CD8-positive, alpha-beta T cell (primary cell): ENCODE measurements at regions of chr5 and their contacts with region 1.

Region 1: DNA sequence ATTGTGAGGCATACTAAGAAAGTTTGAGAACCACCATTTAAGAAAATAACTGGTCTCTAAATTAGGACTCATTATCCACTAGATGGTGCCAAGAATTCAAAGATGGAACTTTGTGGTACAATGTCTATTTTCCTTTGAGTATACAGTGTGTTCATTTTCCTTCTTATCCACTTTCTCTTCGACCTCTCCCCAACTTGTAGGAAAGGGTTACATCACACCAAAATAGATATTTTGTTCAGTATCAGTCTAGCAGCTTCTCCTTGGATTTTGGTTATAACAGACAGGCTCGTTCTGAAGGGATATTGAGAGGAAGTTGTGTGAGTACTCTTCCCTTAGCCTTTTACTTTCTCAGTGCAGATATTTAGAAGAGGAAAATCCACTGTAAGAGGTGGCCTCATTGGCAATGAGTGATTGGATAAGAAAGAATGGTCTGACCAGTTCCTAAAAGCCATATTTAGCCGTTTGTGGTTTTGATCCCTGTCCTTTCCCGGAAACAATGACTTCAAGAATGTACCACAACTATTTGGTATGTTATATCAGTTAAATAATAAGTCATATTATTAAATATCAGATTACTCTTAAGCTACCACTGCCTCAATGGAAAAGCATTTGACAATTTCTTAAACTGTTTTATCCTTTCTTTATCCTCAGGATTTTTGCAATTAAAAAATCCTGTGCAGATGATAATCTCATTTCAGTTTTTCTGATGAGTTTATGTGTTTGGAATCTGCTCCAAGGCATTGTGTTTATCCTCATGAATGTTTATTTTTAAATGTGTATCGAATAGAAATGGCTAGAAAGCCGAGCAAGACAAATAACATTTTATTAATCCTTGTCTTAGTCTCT is 69.0 kb upstream of the GRAMD2B start:
- DNase-seq: peak in 2 of 9 experiments; percentile 57 to 70
- ATAC-seq: peak; percentile 56
- H3K4me3 ChIP-seq: peak overlapping the region in 1 of 2 experiments; percentile 14
- H3K4me3 Mint-ChIP-seq: peak overlapping the region; percentile 66
- H3K27ac ChIP-seq: no peak overlapping the region
- H3K27ac Mint-ChIP-seq: peak overlapping the region; percentile 3
- H3K4me1 ChIP-seq: peaks cover 13% of the 10 kb centered on the region
- H3K4me1 Mint-ChIP-seq: peaks cover 14% of the 10 kb centered on the region
- H3K27me3 ChIP-seq: no peaks in the 10 kb centered on the region
- H3K27me3 Mint-ChIP-seq: peaks cover 3% of the 10 kb centered on the region
- CTCF ChIP-seq: peak; percentile 75

Region 2: DNA sequence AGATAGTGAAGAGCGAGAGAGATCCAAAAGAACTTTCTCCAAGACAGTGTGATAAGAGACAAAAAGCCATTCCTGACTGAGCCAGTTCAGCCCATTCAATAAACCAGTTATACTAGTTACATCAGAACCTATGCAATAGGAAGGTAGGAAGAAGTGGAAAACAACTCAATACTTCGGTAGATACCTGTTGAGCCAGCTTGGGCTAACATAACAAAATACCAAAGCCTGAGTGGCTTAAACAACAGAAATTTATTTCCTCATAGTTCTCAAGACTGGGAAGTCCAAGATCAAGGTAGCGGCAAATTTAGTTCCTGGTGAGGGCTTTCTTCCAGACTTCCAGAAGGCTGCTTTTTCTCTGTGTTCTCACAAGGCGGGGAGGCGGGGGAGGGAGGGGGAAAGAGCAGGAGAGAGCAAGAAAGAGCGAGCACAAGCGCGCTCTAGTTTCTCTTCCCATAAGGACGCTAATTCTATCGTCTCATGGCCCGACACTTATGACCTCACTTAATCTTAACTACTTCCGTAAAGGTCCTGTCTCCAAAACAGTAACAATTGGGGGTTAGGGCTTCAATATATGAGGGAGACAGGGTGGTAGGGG is 145.4 kb before region 1 on chr5:
- CTCF ChIA-PET with region 1: no interaction called
- POLR2A ChIA-PET with region 1: no interaction called
- intact Hi-C with region 1: no loop called
- DNase-seq: no peak
- ATAC-seq: no peak
- H3K4me3 ChIP-seq: no peak overlapping the region
- H3K4me3 Mint-ChIP-seq: no peak overlapping the region
- H3K27ac ChIP-seq: no peak overlapping the region
- H3K27ac Mint-ChIP-seq: no peak overlapping the region
- H3K4me1 ChIP-seq: no peaks in the 10 kb centered on the region
- H3K4me1 Mint-ChIP-seq: no peaks in the 10 kb centered on the region
- H3K27me3 ChIP-seq: no peaks in the 10 kb centered on the region
- H3K27me3 Mint-ChIP-seq: peaks cover 2% of the 10 kb centered on the region
- CTCF ChIP-seq: no peak

Region 3: DNA sequence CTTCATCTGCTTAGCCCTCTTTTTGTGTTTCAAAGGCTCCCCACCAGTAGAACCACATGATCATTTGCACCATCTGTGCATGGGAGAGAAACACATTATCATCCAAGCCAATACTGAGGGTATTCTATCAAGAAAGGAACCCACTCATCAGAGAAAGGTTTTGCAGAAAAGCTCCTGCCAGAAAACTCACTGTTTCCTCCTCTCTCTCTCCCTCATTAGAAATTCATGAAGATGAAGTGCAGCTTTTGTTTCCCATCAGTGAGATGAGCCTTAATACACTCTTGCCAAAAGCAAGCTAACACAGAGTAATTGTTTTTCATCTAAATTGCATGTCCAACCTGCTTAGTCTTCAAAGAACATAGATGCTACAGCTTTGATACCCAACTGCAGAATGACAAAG is 73.4 kb before region 1 on chr5:
- CTCF ChIA-PET with region 1: no interaction called
- POLR2A ChIA-PET with region 1: no interaction called
- intact Hi-C with region 1: no loop called
- DNase-seq: no peak
- ATAC-seq: no peak
- H3K4me3 ChIP-seq: no peak overlapping the region
- H3K4me3 Mint-ChIP-seq: no peak overlapping the region
- H3K27ac ChIP-seq: no peak overlapping the region
- H3K27ac Mint-ChIP-seq: no peak overlapping the region
- H3K4me1 ChIP-seq: no peaks in the 10 kb centered on the region
- H3K4me1 Mint-ChIP-seq: no peaks in the 10 kb centered on the region
- H3K27me3 ChIP-seq: no peaks in the 10 kb centered on the region
- H3K27me3 Mint-ChIP-seq: peaks cover 8% of the 10 kb centered on the region
- CTCF ChIP-seq: no peak

Region 4: DNA sequence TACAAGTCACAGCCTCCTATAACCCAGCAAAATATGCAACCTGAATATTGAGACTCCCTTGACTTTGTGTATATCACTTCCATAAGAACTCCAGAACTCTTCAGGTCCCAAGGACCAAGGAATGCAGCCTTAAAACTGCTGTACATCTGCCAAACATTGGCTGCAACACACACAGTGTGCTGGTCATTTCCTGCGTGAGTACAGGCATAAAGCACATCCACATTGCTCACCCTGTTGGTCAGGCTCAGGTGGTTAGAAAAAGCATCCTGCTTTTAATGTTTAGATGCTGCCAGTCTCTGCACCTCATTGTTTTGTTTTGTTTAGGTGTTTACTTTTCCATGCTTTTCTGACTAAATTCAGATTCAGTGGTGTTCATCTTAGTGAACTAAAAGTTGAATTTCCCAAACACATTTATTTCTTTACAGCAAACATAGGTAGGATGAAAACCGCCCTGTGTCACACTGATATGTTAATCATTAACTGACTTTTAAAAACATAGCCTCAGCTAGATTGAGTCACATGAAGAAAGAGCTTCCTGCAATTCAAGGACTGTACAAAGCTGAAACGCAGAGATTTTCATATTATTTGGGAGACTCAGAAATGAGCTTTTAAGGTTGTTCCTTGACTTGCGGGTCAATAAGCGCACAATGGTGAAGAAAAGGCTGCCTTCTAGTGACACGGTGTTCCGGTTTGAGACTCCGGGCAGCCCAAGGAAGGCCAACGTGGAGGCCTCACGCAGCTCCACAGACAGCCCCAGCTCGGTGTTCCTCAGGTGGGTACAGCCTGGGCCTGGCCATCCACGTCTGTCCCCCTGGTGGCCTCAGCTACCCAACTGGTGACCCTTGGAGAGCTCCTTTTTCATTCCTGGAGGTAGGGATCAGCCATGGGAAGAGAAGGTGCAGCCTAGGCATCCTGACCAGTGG is 16.8 kb after region 1 on chr5:
- CTCF ChIA-PET with region 1: interaction called, 10 read pairs
- POLR2A ChIA-PET with region 1: no interaction called
- intact Hi-C with region 1: no loop called
- DNase-seq: no peak
- ATAC-seq: no peak
- H3K4me3 ChIP-seq: no peak overlapping the region
- H3K4me3 Mint-ChIP-seq: no peak overlapping the region
- H3K27ac ChIP-seq: no peak overlapping the region
- H3K27ac Mint-ChIP-seq: no peak overlapping the region
- H3K4me1 ChIP-seq: peaks cover 14% of the 10 kb centered on the region
- H3K4me1 Mint-ChIP-seq: peaks cover 18% of the 10 kb centered on the region
- H3K27me3 ChIP-seq: no peaks in the 10 kb centered on the region
- H3K27me3 Mint-ChIP-seq: no peaks in the 10 kb centered on the region
- CTCF ChIP-seq: no peak

Region 5: DNA sequence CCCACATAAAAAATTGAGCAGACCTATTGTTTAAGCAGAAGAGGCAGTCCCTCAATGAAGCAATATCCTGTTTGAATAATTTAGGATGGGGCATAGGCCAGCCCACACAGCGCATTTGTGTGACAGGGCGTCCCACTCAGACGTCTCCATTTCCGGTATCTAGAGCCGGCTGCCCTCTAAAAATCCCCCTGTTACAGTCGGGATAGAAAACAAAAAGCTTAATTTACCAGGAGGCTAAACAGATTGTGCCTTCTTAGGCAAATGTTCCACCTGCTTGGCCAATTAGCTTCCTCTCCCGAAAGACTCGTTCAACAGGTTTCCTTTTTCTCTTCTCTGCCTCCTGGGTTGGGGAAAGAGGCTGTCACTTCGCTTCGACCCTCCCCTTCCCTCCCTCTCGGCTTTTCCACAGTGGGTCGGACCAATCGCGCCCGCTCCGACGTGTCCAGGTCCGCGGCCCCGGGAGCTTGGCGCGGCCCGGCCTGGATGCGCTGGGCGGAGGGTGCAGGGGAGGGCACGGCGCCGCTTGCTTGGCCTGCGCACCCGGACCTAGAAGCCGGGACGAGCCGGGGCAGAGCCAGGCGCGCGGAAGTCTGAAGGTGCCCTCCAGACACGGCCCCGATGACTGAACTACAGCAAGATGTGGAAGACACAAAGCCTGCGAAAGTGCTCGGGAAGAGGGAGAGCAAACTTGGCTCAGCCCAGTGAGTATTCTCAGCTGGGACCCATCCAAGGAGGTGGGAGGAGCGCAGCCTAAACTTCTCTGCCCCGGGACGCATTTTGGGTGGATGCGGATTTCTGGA is 69.0 kb after region 1 on chr5 and contains the start of gene GRAMD2B:
- CTCF ChIA-PET with region 1: no interaction called
- POLR2A ChIA-PET with region 1: no interaction called
- intact Hi-C with region 1: no loop called
- DNase-seq: peak; percentile 34 to 90 (median 65)
- ATAC-seq: peak; percentile 93
- H3K4me3 ChIP-seq: peak within 1 kb of the TSS; percentile 78 to 84
- H3K4me3 Mint-ChIP-seq: peak within 1 kb of the TSS; percentile 91
- H3K27ac ChIP-seq: peak within 1 kb of the TSS; percentile 90 to 95
- H3K27ac Mint-ChIP-seq: peak within 1 kb of the TSS; percentile 95
- H3K4me1 ChIP-seq: peaks cover 21% of the 10 kb centered on the region
- H3K4me1 Mint-ChIP-seq: peaks cover 38% of the 10 kb centered on the region
- H3K27me3 ChIP-seq: no peaks in the 10 kb centered on the region
- H3K27me3 Mint-ChIP-seq: no peaks in the 10 kb centered on the region
- CTCF ChIP-seq: no peak
- total RNA-seq, gene GRAMD2B: 8.2 to 10.4 TPM

Region 6: DNA sequence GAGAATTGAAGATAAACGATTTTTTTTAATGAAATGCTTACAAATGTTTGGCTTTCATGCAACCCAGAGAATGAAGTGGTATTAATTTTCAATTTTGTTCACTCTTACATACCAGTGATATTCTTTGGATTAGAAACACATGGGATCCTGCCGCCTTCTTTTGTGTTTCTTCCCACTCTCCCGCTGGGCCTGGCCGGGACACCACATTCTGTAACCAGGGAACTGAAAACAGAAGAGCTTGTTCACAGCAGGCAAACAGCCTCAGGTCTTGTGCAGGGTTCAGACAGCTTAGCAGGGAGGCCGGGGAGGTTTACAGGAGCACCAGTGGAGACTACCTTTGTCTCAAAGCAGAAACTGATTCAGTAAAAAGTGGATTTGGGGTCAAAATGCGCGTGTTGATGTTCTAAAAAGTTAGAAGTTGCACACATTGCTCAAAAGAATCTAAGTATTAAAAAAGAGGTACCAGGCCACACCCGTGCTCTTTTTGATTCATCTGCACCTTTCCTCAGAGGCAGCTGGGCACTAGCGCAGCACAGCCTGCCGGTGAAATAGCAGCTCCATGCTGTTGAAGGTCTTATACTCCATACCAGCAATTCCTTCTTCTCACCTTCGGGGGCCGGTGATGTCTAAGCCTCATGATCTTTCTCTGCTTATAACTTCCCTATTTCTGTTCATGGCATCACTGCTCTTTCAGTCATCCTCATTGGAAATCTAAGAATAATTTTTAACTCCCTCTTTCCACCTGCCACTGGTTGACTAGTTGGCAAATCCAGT is 136.1 kb after region 1 on chr5:
- CTCF ChIA-PET with region 1: interaction called, 3 read pairs
- POLR2A ChIA-PET with region 1: interaction called, 3 read pairs
- intact Hi-C with region 1: loop called (anchors 1 to 5 kb)
- DNase-seq: no peak
- ATAC-seq: no peak
- H3K4me3 ChIP-seq: no peak overlapping the region
- H3K4me3 Mint-ChIP-seq: no peak overlapping the region
- H3K27ac ChIP-seq: no peak overlapping the region
- H3K27ac Mint-ChIP-seq: peak overlapping the region; percentile 73
- H3K4me1 ChIP-seq: no peaks in the 10 kb centered on the region
- H3K4me1 Mint-ChIP-seq: no peaks in the 10 kb centered on the region
- H3K27me3 ChIP-seq: no peaks in the 10 kb centered on the region
- H3K27me3 Mint-ChIP-seq: no peaks in the 10 kb centered on the region
- CTCF ChIP-seq: no peak

Region 7: GRCh38 chr5:126499853-126500342 is 145.7 kb after region 1 on chr5:
- CTCF ChIA-PET with region 1: interaction called, 26 read pairs
- POLR2A ChIA-PET with region 1: no interaction called
- intact Hi-C with region 1: no loop called
- DNase-seq: peak in 5 of 9 experiments; percentile 20 to 73 (median 34)
- ATAC-seq: peak; percentile 82
- H3K4me3 ChIP-seq: no peak overlapping the region
- H3K4me3 Mint-ChIP-seq: peak overlapping the region; percentile 6
- H3K27ac ChIP-seq: no peak overlapping the region
- H3K27ac Mint-ChIP-seq: peak overlapping the region; percentile 84
- H3K4me1 ChIP-seq: peaks cover 13% of the 10 kb centered on the region
- H3K4me1 Mint-ChIP-seq: peaks cover 35% of the 10 kb centered on the region
- H3K27me3 ChIP-seq: no peaks in the 10 kb centered on the region
- H3K27me3 Mint-ChIP-seq: no peaks in the 10 kb centered on the region
- CTCF ChIP-seq: peak; percentile 60

Region 8: GRCh38 chr5:126514131-126514557 is 159.9 kb after region 1 on chr5:
- CTCF ChIA-PET with region 1: interaction called, 10 read pairs
- POLR2A ChIA-PET with region 1: no interaction called
- intact Hi-C with region 1: no loop called
- DNase-seq: no peak
- ATAC-seq: no peak
- H3K4me3 ChIP-seq: no peak overlapping the region
- H3K4me3 Mint-ChIP-seq: no peak overlapping the region
- H3K27ac ChIP-seq: no peak overlapping the region
- H3K27ac Mint-ChIP-seq: no peak overlapping the region
- H3K4me1 ChIP-seq: peaks cover 17% of the 10 kb centered on the region
- H3K4me1 Mint-ChIP-seq: peaks cover 22% of the 10 kb centered on the region
- H3K27me3 ChIP-seq: no peaks in the 10 kb centered on the region
- H3K27me3 Mint-ChIP-seq: no peaks in the 10 kb centered on the region
- CTCF ChIP-seq: no peak

Region 9: GRCh38 chr5:126544087-126544740 is 190.0 kb after region 1 on chr5:
- CTCF ChIA-PET with region 1: interaction called, 264 read pairs
- POLR2A ChIA-PET with region 1: no interaction called
- intact Hi-C with region 1: loop called (anchors 1 kb)
- DNase-seq: peak in 5 of 9 experiments; percentile 17 to 40 (median 36)
- ATAC-seq: no peak
- H3K4me3 ChIP-seq: no peak overlapping the region
- H3K4me3 Mint-ChIP-seq: no peak overlapping the region
- H3K27ac ChIP-seq: no peak overlapping the region
- H3K27ac Mint-ChIP-seq: no peak overlapping the region
- H3K4me1 ChIP-seq: no peaks in the 10 kb centered on the region
- H3K4me1 Mint-ChIP-seq: no peaks in the 10 kb centered on the region
- H3K27me3 ChIP-seq: no peaks in the 10 kb centered on the region
- H3K27me3 Mint-ChIP-seq: no peaks in the 10 kb centered on the region
- CTCF ChIP-seq: peak; percentile 34

Region 10: DNA sequence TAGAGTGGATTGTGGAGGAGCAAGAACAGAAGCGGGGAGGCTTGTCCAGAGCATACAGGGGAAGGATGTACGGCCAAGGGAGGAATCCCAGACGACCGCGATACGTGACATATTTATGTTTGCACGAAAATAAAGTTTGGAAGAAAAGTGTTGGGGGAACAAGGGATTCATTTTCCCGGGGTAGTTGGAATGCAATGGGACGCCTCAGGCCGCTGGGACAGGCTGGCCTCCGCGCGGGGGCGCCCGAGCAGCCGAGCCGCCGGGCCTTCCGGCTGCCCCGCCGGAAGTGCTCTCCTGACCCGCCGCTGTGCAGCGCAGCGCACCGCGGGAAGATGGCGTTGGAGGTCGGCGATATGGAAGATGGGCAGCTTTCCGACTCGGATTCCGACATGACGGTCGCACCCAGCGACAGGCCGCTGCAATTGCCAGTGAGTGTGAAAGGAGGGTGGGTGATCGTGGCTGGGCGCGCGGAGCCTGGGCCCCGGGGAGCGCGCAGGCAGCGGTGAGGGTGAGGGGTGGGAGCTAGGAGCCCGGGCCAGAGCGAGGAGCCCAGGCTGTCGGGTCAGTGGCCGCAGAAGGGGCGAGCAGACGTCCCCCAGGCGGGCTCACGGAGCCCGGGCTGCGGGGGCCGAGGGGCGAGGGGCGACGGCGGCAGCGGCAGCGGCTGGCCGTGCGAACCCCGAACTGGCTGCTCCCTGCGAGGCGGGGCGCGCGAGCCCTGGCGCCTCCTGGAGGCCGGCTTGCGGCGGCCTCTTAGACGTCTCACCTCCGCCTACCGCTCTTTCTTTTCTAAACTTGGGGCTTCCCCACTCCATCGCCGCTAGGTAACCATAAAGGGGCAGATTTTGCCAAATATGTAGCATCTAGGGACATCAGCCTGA is 246.6 kb after region 1 on chr5 and contains the start of gene PHAX:
- CTCF ChIA-PET with region 1: interaction called, 7 read pairs
- POLR2A ChIA-PET with region 1: no interaction called
- intact Hi-C with region 1: loop called in 1 of 2 experiments (anchors 1 kb)
- DNase-seq: peak; percentile 47 to 87 (median 70)
- ATAC-seq: peak; percentile 94
- H3K4me3 ChIP-seq: peak within 1 kb of the TSS; percentile 88 to 98
- H3K4me3 Mint-ChIP-seq: peak within 1 kb of the TSS; percentile 98
- H3K27ac ChIP-seq: peak within 1 kb of the TSS; percentile 83 to 85
- H3K27ac Mint-ChIP-seq: peak within 1 kb of the TSS; percentile 96
- H3K4me1 ChIP-seq: peaks cover 29% of the 10 kb centered on the region
- H3K4me1 Mint-ChIP-seq: peaks cover 33% of the 10 kb centered on the region
- H3K27me3 ChIP-seq: no peaks in the 10 kb centered on the region
- H3K27me3 Mint-ChIP-seq: no peaks in the 10 kb centered on the region
- CTCF ChIP-seq: peak; percentile 66
- total RNA-seq, gene PHAX: 29.4 to 32.8 TPM